ENCODE measurements at regions of chr13 and their contacts with region 1.

Region 1: GRCh38 chr13:44237276-44237767 is 136.3 kb upstream of the SERP2 start:
- DNase-seq: peak; percentile 76
- ATAC-seq: peak; percentile 98 to 99

Region 2: GRCh38 chr13:44306401-44307192 is 69.3 kb after region 1 on chr13:
- intact Hi-C with region 1: loop called in 1 of 2 experiments (anchors 5 kb)
- DNase-seq: peak; percentile 79
- ATAC-seq: peak; percentile 31 to 78